Posterior vena cava (tissue), 2 donors: ENCODE measurements at regions of chr5 and their contacts with region 1.

Region 1: GRCh38 chr5:7565559-7565958 is 169.6 kb downstream of the ADCY2 start:
- DNase-seq: no peak

Region 2: GRCh38 chr5:6419340-6419852 is 1146.2 kb before region 1 on chr5:
- intact Hi-C with region 1: loop called in 1 of 2 experiments (anchors 10 kb)
- DNase-seq: no peak